B cell (primary cell): ENCODE measurements at regions of chr11 and their contacts with region 1.

Region 1: GRCh38 chr11:122578168-122578825 is 77.2 kb upstream of the UBASH3B start:
- DNase-seq: no peak
- ATAC-seq: no peak
- H3K4me3 ChIP-seq: no peak overlapping the region
- H3K4me3 Mint-ChIP-seq: no peak overlapping the region
- H3K27ac ChIP-seq: no peak overlapping the region
- H3K27ac Mint-ChIP-seq: no peak overlapping the region
- H3K4me1 ChIP-seq: peaks cover 6 to 9% of the 10 kb centered on the region in 2 donors
- H3K4me1 Mint-ChIP-seq: peaks cover 13% of the 10 kb centered on the region
- H3K27me3 ChIP-seq: no peaks in the 10 kb centered on the region
- H3K27me3 Mint-ChIP-seq: peaks cover 7% of the 10 kb centered on the region
- CTCF ChIP-seq: no peak

Region 2: GRCh38 chr11:122642472-122642922 is 64.2 kb after region 1 on chr11:
- CTCF ChIA-PET with region 1: no interaction called
- POLR2A ChIA-PET with region 1: no interaction called
- intact Hi-C with region 1: no loop called
- DNase-seq: no peak
- ATAC-seq: no peak
- H3K4me3 ChIP-seq: no peak overlapping the region
- H3K4me3 Mint-ChIP-seq: no peak overlapping the region
- H3K27ac ChIP-seq: no peak overlapping the region
- H3K27ac Mint-ChIP-seq: no peak overlapping the region
- H3K4me1 ChIP-seq: no peaks in the 10 kb centered on the region
- H3K4me1 Mint-ChIP-seq: no peaks in the 10 kb centered on the region
- H3K27me3 ChIP-seq: no peaks in the 10 kb centered on the region
- H3K27me3 Mint-ChIP-seq: peaks cover 3% of the 10 kb centered on the region
- CTCF ChIP-seq: no peak

Region 3: GRCh38 chr11:122781378-122782195 is 203.3 kb after region 1 on chr11:
- CTCF ChIA-PET with region 1: interaction called, 75 read pairs
- POLR2A ChIA-PET with region 1: no interaction called
- intact Hi-C with region 1: no loop called
- DNase-seq: peak; percentile 78
- ATAC-seq: peak; percentile 90
- H3K4me3 ChIP-seq: no peak overlapping the region
- H3K4me3 Mint-ChIP-seq: no peak overlapping the region
- H3K27ac ChIP-seq: no peak overlapping the region
- H3K27ac Mint-ChIP-seq: no peak overlapping the region
- H3K4me1 ChIP-seq: no peaks in the 10 kb centered on the region
- H3K4me1 Mint-ChIP-seq: no peaks in the 10 kb centered on the region
- H3K27me3 ChIP-seq: no peaks in the 10 kb centered on the region
- H3K27me3 Mint-ChIP-seq: no peaks in the 10 kb centered on the region
- CTCF ChIP-seq: peak; percentile 93

Region 4: GRCh38 chr11:123020968-123021367 is 442.7 kb after region 1 on chr11:
- CTCF ChIA-PET with region 1: interaction called, 6 read pairs
- POLR2A ChIA-PET with region 1: no interaction called
- intact Hi-C with region 1: loop called (anchors 2 kb)
- DNase-seq: peak; percentile 58
- ATAC-seq: peak; percentile 82
- H3K4me3 ChIP-seq: no peak overlapping the region
- H3K4me3 Mint-ChIP-seq: no peak overlapping the region
- H3K27ac ChIP-seq: no peak overlapping the region
- H3K27ac Mint-ChIP-seq: no peak overlapping the region
- H3K4me1 ChIP-seq: peaks cover 0 to 9% of the 10 kb centered on the region in 2 donors
- H3K4me1 Mint-ChIP-seq: peaks cover 7% of the 10 kb centered on the region
- H3K27me3 ChIP-seq: peaks cover 0 to 6% (median 2%) of the 10 kb centered on the region in 4 experiments
- H3K27me3 Mint-ChIP-seq: peaks cover 12% of the 10 kb centered on the region
- CTCF ChIP-seq: peak; percentile 67